Activated CD4-positive, alpha-beta memory T cell treated with anti-CD3 and anti-CD28 coated beads for 36 hours (primary cell): ENCODE measurements at regions of chr2 and their contacts with region 1.

Region 1: DNA sequence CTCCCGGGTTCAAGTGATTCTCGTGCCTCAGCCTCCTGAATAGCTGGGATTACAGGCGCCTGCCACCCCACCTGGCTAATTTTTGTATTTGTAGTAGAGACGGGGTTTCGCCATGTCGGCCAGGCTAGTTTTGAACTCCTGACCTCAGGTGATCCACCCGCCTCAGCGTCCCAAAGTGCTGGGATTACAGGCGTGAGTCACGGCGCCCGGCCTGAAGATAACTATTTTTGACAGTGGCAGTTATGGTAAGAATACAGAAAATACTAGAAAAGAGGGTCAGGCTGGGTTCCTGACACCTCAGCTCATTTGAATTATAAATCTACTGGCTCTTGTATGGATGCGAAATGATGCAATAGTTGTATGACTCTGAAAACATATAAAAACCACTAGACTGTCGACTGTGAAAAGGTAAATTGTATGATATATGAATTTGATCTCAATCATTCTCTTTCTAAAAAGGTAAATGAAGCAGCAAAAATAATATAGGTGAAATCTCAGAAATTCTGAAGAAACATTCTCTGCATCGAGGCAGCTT is 11.1 kb upstream of the DGKD start:
- DNase-seq: no peak
- H3K4me3 Mint-ChIP-seq: no peak overlapping the region
- H3K27ac Mint-ChIP-seq: no peak overlapping the region
- H3K4me1 Mint-ChIP-seq: no peaks in the 10 kb centered on the region
- H3K27me3 Mint-ChIP-seq: no peaks in the 10 kb centered on the region

Region 2: GRCh38 chr2:233331536-233331935 is 11.7 kb before region 1 on chr2:
- CTCF ChIA-PET with region 1: interaction called, 10 read pairs
- POLR2A ChIA-PET with region 1: no interaction called
- intact Hi-C with region 1: no loop called
- DNase-seq: peak; percentile 81
- H3K4me3 Mint-ChIP-seq: peak overlapping the region; percentile 1
- H3K27ac Mint-ChIP-seq: peak overlapping the region; percentile 88
- H3K4me1 Mint-ChIP-seq: peaks cover 31% of the 10 kb centered on the region
- H3K27me3 Mint-ChIP-seq: no peaks in the 10 kb centered on the region

Region 3: DNA sequence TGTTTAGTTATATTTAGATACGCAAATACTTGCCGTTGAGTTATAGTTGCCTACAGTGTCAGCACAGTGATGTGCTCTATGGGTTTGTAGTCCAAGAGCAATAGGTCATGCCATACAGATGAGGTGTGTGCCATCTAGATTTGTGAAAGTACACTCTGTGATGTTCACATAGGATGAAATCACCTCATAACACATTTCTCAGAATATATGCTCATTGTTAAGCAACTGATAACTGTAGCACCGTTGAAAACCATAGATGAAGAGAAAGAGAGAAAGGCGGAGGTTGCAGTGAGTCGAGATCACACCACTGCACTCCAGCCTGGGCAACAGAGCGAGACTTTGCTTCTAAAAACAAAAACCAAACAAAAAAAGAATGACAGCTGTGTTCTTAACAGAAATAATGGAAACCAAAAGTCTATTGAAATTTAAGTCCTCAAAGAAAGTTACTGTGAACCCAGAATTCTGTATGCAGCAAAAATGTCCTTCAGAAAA is 20.6 kb after region 1 on chr2:
- CTCF ChIA-PET with region 1: no interaction called
- POLR2A ChIA-PET with region 1: no interaction called
- intact Hi-C with region 1: no loop called
- DNase-seq: no peak
- H3K4me3 Mint-ChIP-seq: no peak overlapping the region
- H3K27ac Mint-ChIP-seq: no peak overlapping the region
- H3K4me1 Mint-ChIP-seq: peaks cover 27% of the 10 kb centered on the region
- H3K27me3 Mint-ChIP-seq: no peaks in the 10 kb centered on the region